ENCODE measurements at regions of chr2 and their contacts with region 1.

Region 1: DNA sequence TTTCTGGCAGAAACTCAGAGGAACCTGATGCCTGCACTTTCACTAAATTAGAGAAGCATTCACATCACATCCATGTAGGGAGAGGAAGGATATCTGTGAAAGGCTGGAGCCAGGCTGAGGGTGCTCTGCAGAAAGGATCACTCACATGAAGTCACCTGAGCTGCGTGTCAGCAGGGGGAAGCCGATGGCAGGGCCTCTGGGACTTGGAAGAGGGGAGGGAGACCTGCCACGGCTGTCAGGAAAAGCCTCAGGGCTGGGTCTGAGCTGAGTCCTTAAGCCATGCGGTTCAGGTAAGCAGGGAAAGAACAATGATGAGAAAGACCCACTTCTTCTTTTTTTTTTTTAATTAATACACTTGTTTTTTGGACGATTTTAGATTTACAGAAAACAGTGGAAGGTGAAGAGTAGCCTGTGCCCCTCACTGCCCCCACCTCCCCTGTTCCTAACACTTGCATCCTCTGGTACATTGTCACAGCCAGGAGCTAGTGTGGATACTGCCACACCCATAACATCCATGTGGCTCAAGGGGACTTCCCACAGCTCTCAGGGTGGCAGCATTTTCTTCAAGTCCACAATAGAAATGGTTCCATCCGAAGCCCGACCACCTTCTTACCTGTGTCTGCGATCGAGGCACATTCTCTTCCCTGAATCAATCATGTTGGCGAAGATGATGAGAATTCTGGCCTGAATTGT is 156.5 kb upstream of the TPO start:
- DNase-seq: no peak
- H3K4me3 ChIP-seq: no peak overlapping the region
- H3K27ac ChIP-seq: no peak overlapping the region
- H3K4me1 ChIP-seq: no peaks in the 10 kb centered on the region
- H3K27me3 ChIP-seq: no peaks in the 10 kb centered on the region
- CTCF ChIP-seq: no peak
- EP300 ChIP-seq: no peak
- POLR2A ChIP-seq: no peak
- RAD21 ChIP-seq: no peak

Region 2: GRCh38 chr2:1246239-1246638 is 10.5 kb before region 1 on chr2:
- CTCF ChIA-PET with region 1: interaction called, 18 read pairs
- POLR2A ChIA-PET with region 1: interaction called, 4 read pairs
- DNase-seq: no peak
- H3K4me3 ChIP-seq: no peak overlapping the region
- H3K27ac ChIP-seq: no peak overlapping the region
- H3K4me1 ChIP-seq: no peaks in the 10 kb centered on the region
- H3K27me3 ChIP-seq: no peaks in the 10 kb centered on the region
- CTCF ChIP-seq: peak; percentile 51 to 63 (median 56)
- EP300 ChIP-seq: no peak
- POLR2A ChIP-seq: no peak
- RAD21 ChIP-seq: peak; percentile 53 to 62